Pancreas (tissue), 10 donors: ENCODE measurements at regions of chr1 and their contacts with region 1.

Region 1: DNA sequence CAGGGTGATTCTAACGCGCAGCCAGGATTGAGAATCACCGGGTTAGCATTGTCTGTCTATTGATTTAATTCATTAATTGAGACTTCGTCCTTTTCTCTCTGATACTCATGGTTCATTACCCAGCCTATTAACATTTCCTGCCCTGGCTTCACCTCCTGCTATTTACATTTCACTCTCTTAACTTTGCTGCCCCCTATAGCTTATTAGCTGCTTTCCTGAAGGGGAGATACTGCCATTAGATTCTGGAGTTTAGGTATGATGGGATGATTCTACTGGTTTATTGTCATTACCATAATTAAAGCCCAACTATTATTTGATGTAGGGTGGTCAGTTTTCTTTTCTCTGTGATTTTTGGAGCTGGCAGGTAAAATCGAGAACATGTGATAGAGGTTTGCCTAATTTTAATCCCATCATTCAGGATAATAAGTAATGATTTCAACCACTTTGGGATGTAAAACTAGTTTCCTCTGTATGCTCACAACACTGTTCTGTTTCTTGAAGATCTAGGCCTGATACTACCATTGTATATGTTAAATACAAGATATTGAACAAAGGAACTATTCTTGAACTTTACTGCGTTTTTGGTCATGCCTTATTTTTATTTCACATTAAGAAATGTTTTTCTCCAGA is 6.4 kb downstream of the PPP2R5A start:
- DNase-seq: no peak
- ATAC-seq: peak; percentile 41 to 86 (median 79)
- H3K4me3 ChIP-seq: no peak overlapping the region
- H3K27ac ChIP-seq: no peak overlapping the region
- H3K4me1 ChIP-seq: peaks cover 11 to 63% (median 62%) of the 10 kb centered on the region in 3 donors
- H3K27me3 ChIP-seq: no peaks in the 10 kb centered on the region
- CTCF ChIP-seq: peak in 2 of 4 donors; percentile 26 to 31

Region 2: GRCh38 chr1:212089560-212090163 is 202.0 kb before region 1 on chr1:
- intact Hi-C with region 1: loop called in 1 of 3 experiments (anchors 10 kb)
- DNase-seq: no peak
- ATAC-seq: no peak
- H3K4me3 ChIP-seq: no peak overlapping the region
- H3K27ac ChIP-seq: no peak overlapping the region
- H3K4me1 ChIP-seq: no peaks in the 10 kb centered on the region
- H3K27me3 ChIP-seq: no peaks in the 10 kb centered on the region
- CTCF ChIP-seq: no peak

Region 3: DNA sequence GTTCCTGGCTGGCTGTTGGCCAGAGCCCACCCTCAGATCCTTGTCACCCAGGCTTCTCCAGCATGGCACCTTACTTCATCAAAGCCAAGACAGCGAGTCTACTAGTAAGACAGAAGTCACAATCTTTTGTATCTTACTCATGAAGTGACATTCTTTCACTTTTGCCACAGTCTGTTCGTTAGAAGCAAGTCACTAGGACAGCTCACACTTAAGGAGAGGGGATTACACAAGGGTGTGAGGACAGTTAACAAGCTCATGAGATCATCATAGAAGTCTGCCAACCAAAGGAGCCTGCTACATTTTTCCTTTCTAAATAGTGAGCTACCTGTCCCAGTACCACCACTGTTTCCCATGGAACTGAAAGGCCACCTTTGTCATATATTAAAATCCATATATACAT is 61.6 kb after region 1 on chr1:
- intact Hi-C with region 1: no loop called
- DNase-seq: no peak
- ATAC-seq: no peak
- H3K4me3 ChIP-seq: no peak overlapping the region
- H3K27ac ChIP-seq: no peak overlapping the region
- H3K4me1 ChIP-seq: no peaks in the 10 kb centered on the region
- H3K27me3 ChIP-seq: no peaks in the 10 kb centered on the region
- CTCF ChIP-seq: no peak